ENCODE measurements at regions of chrX and their contacts with region 1.

Region 1: GRCh38 chrX:10189317-10190268 is 32.8 kb downstream of the CLCN4 start:
- DNase-seq: peak; percentile 78
- H3K4me3 Mint-ChIP-seq: no peak overlapping the region
- H3K27ac Mint-ChIP-seq: no peak overlapping the region
- H3K4me1 Mint-ChIP-seq: no peaks in the 10 kb centered on the region
- H3K27me3 Mint-ChIP-seq: peaks cover 26% of the 10 kb centered on the region
- CTCF ChIP-seq: peak; percentile 83

Region 2: DNA sequence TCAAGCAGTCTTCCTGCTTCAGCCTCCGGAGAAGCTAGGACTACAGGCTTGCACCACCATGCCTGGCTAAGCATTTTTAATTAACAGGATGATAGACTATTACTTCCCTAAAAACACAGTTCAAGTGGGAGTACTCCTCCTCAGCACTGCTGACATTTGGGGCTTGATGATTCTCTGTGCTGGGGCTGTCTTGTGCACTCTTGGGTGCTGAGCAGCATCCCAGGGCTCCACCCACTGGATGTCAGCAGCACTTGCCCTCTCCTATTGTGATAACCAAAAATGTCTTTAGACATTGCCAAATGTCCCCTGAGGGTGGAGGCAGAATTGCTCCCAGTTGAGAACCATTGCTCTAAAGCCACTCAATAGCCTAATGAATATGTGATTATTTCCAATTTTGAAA is 27.6 kb after region 1 on chrX:
- CTCF ChIA-PET with region 1: interaction called, 28 read pairs
- POLR2A ChIA-PET with region 1: no interaction called
- intact Hi-C with region 1: no loop called
- DNase-seq: no peak
- H3K4me3 Mint-ChIP-seq: no peak overlapping the region
- H3K27ac Mint-ChIP-seq: no peak overlapping the region
- H3K4me1 Mint-ChIP-seq: no peaks in the 10 kb centered on the region
- H3K27me3 Mint-ChIP-seq: no peaks in the 10 kb centered on the region
- CTCF ChIP-seq: no peak

Region 3: DNA sequence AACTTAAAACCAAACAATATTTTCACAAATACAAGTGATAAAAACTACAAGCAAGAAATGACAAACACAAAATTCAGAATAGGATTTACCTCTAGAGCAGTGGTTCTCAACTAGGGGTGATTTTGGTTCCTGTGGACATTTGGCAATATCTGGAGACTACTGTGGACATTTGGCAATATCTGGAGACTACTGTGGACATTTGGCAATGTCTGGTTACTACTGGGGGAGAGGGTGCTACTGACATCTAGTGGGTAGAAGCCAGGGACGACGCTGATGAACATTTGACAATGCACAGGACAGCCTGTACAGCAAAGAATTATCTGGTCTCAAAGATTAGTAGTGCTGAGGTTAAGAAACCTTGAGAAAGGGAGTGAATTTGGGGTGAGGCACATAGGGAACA is 137.0 kb after region 1 on chrX:
- CTCF ChIA-PET with region 1: interaction called, 5 read pairs
- POLR2A ChIA-PET with region 1: interaction called, 3 read pairs
- intact Hi-C with region 1: loop called (anchors 1 kb)
- DNase-seq: peak; percentile 53
- H3K4me3 Mint-ChIP-seq: no peak overlapping the region
- H3K27ac Mint-ChIP-seq: no peak overlapping the region
- H3K4me1 Mint-ChIP-seq: peaks cover 10% of the 10 kb centered on the region
- H3K27me3 Mint-ChIP-seq: peaks cover 10% of the 10 kb centered on the region
- CTCF ChIP-seq: peak; percentile 17

Region 4: DNA sequence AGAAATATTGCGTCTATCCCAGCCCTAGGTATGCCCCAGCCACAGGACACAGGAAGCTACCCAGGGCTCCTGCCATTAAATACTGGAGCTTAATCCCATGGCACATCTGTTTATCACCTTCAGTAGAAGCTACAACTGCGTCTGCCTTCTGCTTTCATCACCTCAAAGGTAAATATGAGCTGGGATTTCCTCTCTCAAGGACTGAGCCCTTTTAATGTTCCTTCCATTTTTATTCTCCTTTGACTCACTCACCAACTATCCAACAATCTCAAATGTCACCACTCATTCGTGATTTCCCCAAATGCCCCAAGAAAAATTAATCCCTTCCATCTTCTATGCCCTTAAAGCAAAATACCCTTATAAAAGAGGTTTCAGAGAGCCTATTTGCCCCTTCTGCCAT is 432.6 kb after region 1 on chrX:
- CTCF ChIA-PET with region 1: interaction called, 128 read pairs
- POLR2A ChIA-PET with region 1: interaction called, 4 read pairs
- intact Hi-C with region 1: no loop called
- DNase-seq: no peak
- H3K4me3 Mint-ChIP-seq: no peak overlapping the region
- H3K27ac Mint-ChIP-seq: no peak overlapping the region
- H3K4me1 Mint-ChIP-seq: peaks cover 18% of the 10 kb centered on the region
- H3K27me3 Mint-ChIP-seq: no peaks in the 10 kb centered on the region
- CTCF ChIP-seq: no peak

Region 5: GRCh38 chrX:10722851-10723250 is 533.3 kb after region 1 on chrX:
- CTCF ChIA-PET with region 1: interaction called, 147 read pairs
- POLR2A ChIA-PET with region 1: no interaction called
- intact Hi-C with region 1: loop called (anchors 1 kb)
- DNase-seq: peak; percentile 57
- H3K4me3 Mint-ChIP-seq: no peak overlapping the region
- H3K27ac Mint-ChIP-seq: no peak overlapping the region
- H3K4me1 Mint-ChIP-seq: no peaks in the 10 kb centered on the region
- H3K27me3 Mint-ChIP-seq: peaks cover 26% of the 10 kb centered on the region
- CTCF ChIP-seq: peak; percentile 73

Region 6: GRCh38 chrX:11129534-11130105 is 940.0 kb after region 1 on chrX:
- CTCF ChIA-PET with region 1: interaction called, 29 read pairs
- POLR2A ChIA-PET with region 1: no interaction called
- intact Hi-C with region 1: no loop called
- DNase-seq: no peak
- H3K4me3 Mint-ChIP-seq: no peak overlapping the region
- H3K27ac Mint-ChIP-seq: no peak overlapping the region
- H3K4me1 Mint-ChIP-seq: no peaks in the 10 kb centered on the region
- H3K27me3 Mint-ChIP-seq: peaks cover 18% of the 10 kb centered on the region
- CTCF ChIP-seq: no peak